ENCODE measurements at regions of chr4 and their contacts with region 1.

Region 1: GRCh38 chr4:986879-987623 is at the start of gene IDUA:
- DNase-seq: peak; percentile 88 to 93 (median 90)
- H3K4me3 ChIP-seq: peak within 1 kb of the TSS; percentile 65 to 90 (median 81)
- H3K27ac ChIP-seq: peak within 1 kb of the TSS in 1 of 2 experiments; percentile 86
- H3K4me1 ChIP-seq: peaks cover 6 to 30% (median 29%) of the 10 kb centered on the region in 4 experiments
- H3K27me3 ChIP-seq: no peaks in the 10 kb centered on the region

Region 2: DNA sequence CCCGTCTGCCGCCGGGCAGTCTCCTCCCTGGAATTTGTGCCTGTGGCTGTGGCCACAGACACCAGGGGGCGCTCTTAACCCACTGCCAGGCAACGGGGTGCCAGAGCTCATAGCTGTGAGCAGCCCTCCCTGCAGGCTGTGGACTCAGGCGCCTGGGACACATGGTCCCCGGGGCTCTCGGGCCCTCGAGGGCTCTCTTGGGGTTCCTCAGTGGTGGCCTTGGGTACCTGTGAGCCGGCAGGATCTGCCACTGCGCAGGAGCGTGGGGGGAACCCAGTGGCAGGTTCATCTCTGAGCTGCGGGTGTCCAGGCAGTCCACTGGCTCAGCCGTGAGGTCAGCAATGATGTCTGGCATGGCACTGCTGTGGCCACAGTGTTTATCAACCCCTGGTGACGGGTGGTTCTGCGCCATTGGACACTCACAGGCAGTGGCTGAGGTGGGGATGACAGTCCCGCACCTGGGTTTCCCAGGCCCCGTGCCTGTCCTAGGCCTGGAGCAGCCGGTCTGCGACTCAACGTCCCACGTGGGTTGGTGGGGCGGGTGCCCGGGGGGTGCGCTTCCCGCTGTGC is 244.2 kb before region 1 on chr4:
- CTCF ChIA-PET with region 1: interaction called, 17 read pairs
- POLR2A ChIA-PET with region 1: no interaction called
- DNase-seq: peak; percentile 36 to 72 (median 63)
- H3K4me3 ChIP-seq: no peak overlapping the region
- H3K27ac ChIP-seq: no peak overlapping the region
- H3K4me1 ChIP-seq: no peaks in the 10 kb centered on the region
- H3K27me3 ChIP-seq: no peaks in the 10 kb centered on the region

Region 3: GRCh38 chr4:891747-892146 is 95.3 kb before region 1 on chr4:
- CTCF ChIA-PET with region 1: interaction called, 17 read pairs
- POLR2A ChIA-PET with region 1: interaction called, 4 read pairs
- DNase-seq: peak in 2 of 3 donors; percentile 32 to 43
- H3K4me3 ChIP-seq: no peak overlapping the region
- H3K27ac ChIP-seq: no peak overlapping the region
- H3K4me1 ChIP-seq: no peaks in the 10 kb centered on the region
- H3K27me3 ChIP-seq: no peaks in the 10 kb centered on the region

Region 4: GRCh38 chr4:931194-931959 is 55.7 kb before region 1 on chr4:
- CTCF ChIA-PET with region 1: interaction called, 10 read pairs
- POLR2A ChIA-PET with region 1: interaction called, 3 read pairs
- DNase-seq: peak in 2 of 3 donors; percentile 50 to 55
- H3K4me3 ChIP-seq: peak overlapping the region; percentile 86 to 99 (median 97)
- H3K27ac ChIP-seq: peak overlapping the region; percentile 90 to 94
- H3K4me1 ChIP-seq: peaks cover 11 to 30% (median 21%) of the 10 kb centered on the region in 4 experiments
- H3K27me3 ChIP-seq: no peaks in the 10 kb centered on the region